ENCODE measurements at regions of chr1 and their contacts with region 1.

Region 1: GRCh38 chr1:63674238-63674864 is 81.1 kb downstream of the PGM1 start:
- DNase-seq: peak; percentile 96
- ATAC-seq: peak; percentile 98
- H3K4me3 ChIP-seq: no peak overlapping the region
- H3K27ac ChIP-seq: peak overlapping the region; percentile 60
- H3K4me1 ChIP-seq: peaks cover 14% of the 10 kb centered on the region
- H3K27me3 ChIP-seq: no peaks in the 10 kb centered on the region
- CTCF ChIP-seq: peak; percentile 89

Region 2: GRCh38 chr1:63662056-63662836 is 12.1 kb before region 1 on chr1:
- CTCF ChIA-PET with region 1: interaction called, 17 read pairs
- POLR2A ChIA-PET with region 1: interaction called, 20 read pairs
- intact Hi-C with region 1: loop called (anchors 1 kb)
- DNase-seq: peak; percentile 93
- ATAC-seq: peak; percentile 81
- H3K4me3 ChIP-seq: peak overlapping the region; percentile 41; the same call in 1 of the 2 replicates
- H3K27ac ChIP-seq: peak overlapping the region; percentile 99
- H3K4me1 ChIP-seq: peaks cover 48% of the 10 kb centered on the region
- H3K27me3 ChIP-seq: no peaks in the 10 kb centered on the region
- CTCF ChIP-seq: no peak

Region 3: GRCh38 chr1:63835075-63835633 is 160.8 kb after region 1 on chr1:
- CTCF ChIA-PET with region 1: no interaction called
- POLR2A ChIA-PET with region 1: no interaction called
- intact Hi-C with region 1: no loop called
- DNase-seq: peak; percentile 85
- ATAC-seq: peak; percentile 83
- H3K4me3 ChIP-seq: no peak overlapping the region
- H3K27ac ChIP-seq: peak overlapping the region; percentile 60
- H3K4me1 ChIP-seq: peaks cover 25% of the 10 kb centered on the region
- H3K27me3 ChIP-seq: no peaks in the 10 kb centered on the region
- CTCF ChIP-seq: no peak

Region 4: DNA sequence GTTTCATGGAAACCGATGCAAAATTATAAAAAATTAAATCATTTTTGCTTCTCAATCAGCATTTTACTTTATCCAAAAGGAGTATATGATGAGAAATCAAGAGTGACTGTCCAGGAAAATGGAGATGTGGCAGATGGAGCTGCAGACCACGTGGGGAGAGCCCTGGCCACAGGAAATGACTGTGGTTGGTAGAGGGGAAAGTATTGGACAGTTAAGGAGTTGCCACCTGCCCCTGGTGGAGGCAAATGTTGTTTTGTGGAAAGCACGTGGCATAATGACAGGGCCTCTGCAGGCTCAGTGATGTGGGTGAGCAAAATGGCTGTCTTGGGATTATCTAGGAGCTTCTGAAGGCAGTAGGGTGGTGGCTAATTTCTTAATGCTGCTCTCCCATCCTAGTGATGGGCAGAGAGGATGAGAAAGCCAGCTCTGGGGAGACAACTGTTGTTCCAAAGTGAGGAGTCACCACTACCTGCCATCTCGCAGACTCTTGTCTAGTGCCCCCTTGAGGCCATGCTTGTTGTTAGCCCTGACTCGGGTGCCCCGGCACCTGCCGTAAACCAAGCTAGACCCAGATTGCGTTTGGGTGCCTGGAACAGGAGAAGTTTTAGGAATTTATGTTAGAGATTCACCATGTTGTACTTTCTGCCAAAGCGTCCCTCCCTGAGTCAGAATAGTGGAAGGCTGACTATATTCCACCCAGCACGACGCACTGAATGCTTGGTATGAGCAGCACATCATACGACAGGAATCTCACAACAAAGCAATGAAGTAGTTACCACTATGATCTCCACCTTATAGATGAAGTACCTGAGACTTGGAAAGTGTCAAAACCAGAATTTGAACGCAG is 243.4 kb after region 1 on chr1:
- CTCF ChIA-PET with region 1: interaction called, 3 read pairs
- POLR2A ChIA-PET with region 1: no interaction called
- intact Hi-C with region 1: loop called (anchors 10 kb)
- DNase-seq: peak; percentile 29
- ATAC-seq: no peak
- H3K4me3 ChIP-seq: no peak overlapping the region
- H3K27ac ChIP-seq: no peak overlapping the region
- H3K4me1 ChIP-seq: peaks cover 25% of the 10 kb centered on the region
- H3K27me3 ChIP-seq: no peaks in the 10 kb centered on the region
- CTCF ChIP-seq: peak; percentile 53

Measured in PC-3 (cell line).